ENCODE measurements at regions of chr5 and their contacts with region 1.

Region 1: DNA sequence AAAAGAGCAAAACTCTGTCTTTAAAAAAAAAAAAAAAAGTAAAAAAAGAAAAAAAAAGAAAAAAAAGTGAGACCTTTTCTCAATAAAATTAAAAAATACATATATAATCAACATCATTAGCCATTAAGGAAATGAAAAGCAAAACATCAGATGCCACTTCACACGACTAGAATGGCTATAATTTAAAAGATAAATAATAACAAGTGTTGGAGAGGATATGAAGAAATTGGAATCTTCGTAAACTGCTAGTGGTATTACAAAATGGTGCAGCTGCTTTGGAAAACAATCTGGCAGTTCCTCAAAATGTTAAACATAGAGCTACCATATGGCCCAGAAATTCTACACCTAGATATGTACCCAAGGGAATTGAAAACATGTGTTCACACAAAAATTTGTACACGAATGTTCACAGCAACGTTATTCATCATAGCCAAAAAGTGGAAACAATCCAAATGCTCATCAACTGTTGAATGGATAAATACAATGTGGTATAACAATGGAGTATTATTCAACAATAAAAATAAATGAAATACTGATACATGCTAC is 45.3 kb upstream of the SIL1 start:
- DNase-seq: no peak
- H3K4me3 ChIP-seq: no peak overlapping the region
- H3K27me3 ChIP-seq: peaks cover 4% of the 10 kb centered on the region
- CTCF ChIP-seq: no peak

Region 2: DNA sequence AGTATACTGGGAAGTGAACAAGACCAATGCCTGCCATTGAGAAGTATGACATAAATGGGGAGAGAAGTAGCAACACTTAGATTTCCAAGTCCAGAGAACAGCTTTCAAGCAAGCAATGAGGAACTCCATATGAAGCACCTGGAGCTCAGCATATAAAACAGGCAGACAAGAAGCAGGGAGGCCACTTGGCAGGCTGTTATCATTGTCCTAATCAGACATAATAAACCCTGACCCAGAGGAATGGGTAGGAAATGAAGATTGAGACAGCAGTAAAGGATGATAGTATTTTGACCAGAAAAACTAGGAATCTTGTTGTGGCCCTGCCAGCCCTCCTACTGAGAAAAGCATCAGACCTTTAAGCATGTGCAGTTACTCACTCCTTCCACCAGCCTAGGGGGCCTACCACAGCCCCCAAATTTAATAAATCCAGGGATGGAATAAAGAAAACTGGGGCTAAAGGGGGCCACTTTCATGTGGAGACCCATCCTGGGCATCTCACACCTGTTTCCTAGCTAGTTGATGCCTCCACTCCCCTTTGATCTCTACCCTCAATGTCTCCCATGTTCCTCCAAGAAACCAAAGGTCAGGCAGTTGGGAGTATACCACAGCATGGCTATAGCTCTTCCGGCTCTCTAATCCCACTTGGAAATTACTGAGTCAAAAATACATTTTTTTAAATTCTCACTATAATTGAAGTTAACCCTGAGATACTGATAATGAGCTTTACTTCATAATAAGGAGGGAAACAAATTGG is 180.4 kb before region 1 on chr5:
- CTCF ChIA-PET with region 1: no interaction called
- POLR2A ChIA-PET with region 1: interaction called, 11 read pairs
- DNase-seq: no peak
- H3K4me3 ChIP-seq: no peak overlapping the region
- H3K27me3 ChIP-seq: no peaks in the 10 kb centered on the region
- CTCF ChIP-seq: no peak